ENCODE measurements at regions of chr4 and their contacts with region 1.

Region 1: DNA sequence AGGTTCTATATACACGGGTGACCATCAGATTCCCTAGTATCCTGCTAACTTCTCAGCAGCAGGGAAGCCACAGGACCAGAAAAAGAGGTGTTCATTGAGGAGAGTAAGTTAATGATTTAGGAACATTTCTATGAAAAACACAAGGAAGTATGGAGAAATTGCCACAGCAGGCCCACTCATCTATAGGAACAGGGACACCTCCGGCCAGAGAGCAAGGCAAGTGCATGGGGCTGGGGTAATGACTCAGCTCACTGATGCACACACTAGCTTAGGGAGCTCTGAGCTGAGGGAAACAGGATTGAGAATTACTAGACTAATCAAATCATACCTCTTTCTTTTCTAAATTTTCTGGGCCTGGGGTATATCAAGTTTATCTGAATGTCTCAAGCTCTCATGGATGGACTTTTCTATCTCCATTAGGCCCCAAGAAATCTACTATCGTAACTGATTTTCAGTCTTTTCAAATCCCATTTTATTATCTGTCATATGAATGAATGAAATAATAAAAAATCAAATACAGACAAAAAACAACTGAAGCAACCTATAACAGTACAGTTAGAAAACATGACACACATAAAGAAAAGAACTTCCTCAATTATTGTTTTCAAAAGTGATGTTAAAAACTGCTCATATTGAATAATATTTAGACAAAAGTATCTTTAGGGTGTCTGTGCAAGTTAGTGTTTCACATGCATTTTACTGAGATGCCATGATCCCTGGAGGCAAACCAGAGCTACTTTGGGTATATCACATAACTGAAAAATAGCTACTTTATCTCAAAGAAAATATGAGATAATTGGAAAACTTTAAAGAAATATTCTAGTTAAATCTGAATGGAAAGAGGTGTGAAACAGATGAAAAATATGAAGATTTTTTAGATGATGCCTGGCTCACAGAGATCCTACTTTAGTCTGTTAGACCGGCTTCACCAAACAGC is 89.8 kb downstream of the FBXO8 start:
- DNase-seq: peak; percentile 42
- H3K4me3 ChIP-seq: no peak overlapping the region
- H3K27ac ChIP-seq: peak overlapping the region in 1 of 2 experiments; percentile 100; a peak in 3 of 4 replicates
- H3K4me1 ChIP-seq: peaks cover 0 to 46% of the 10 kb centered on the region in 2 experiments; a peak in 2 of 4 replicates
- H3K27me3 ChIP-seq: no peaks in the 10 kb centered on the region
- CTCF ChIP-seq: no peak
- EP300 ChIP-seq: peak in 1 of 2 experiments; percentile 98; a peak in 3 of 4 replicates
- RAD21 ChIP-seq: peak; percentile 33; the same call in 1 of the 2 replicates

Region 2: DNA sequence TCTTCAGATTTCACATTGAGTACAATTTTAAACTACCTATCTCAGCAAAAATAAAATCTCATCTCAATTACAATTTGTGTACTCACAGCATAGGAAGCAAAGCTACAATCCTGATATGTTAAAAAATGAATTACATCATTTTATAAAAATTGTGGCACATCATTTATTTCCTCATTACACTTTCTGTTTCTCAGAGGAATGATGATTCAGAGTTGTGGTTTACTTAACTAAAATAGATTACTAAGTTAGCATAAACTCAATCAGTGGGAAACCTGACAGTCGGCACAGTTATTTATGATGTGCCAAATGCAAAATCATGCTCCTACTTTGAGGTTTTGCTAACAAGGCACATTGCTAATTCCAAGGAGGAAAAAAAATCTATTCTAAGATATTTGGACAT is 235.3 kb before region 1 on chr4:
- CTCF ChIA-PET with region 1: no interaction called
- POLR2A ChIA-PET with region 1: no interaction called
- DNase-seq: no peak
- H3K4me3 ChIP-seq: no peak overlapping the region
- H3K27ac ChIP-seq: peak overlapping the region in 1 of 2 experiments; percentile 34; a peak in 1 of 4 replicates
- H3K4me1 ChIP-seq: no peaks in the 10 kb centered on the region; a peak in 2 of 4 replicates
- H3K27me3 ChIP-seq: no peaks in the 10 kb centered on the region
- CTCF ChIP-seq: no peak
- EP300 ChIP-seq: no peak
- RAD21 ChIP-seq: no peak

Region 3: GRCh38 chr4:174156239-174156826 is 37.4 kb before region 1 on chr4:
- CTCF ChIA-PET with region 1: interaction called, 3 read pairs
- POLR2A ChIA-PET with region 1: interaction called, 20 read pairs
- DNase-seq: peak; percentile 27
- H3K4me3 ChIP-seq: peak overlapping the region in 1 of 2 experiments; percentile 40; a peak in 1 of 4 replicates
- H3K27ac ChIP-seq: peak overlapping the region; percentile 74 to 100; a peak in 3 of 4 replicates
- H3K4me1 ChIP-seq: peaks cover 40 to 51% of the 10 kb centered on the region in 2 experiments; a peak in 3 of 4 replicates
- H3K27me3 ChIP-seq: no peaks in the 10 kb centered on the region
- CTCF ChIP-seq: peak; percentile 76
- EP300 ChIP-seq: peak in 1 of 2 experiments; percentile 56; a peak in 1 of 4 replicates
- RAD21 ChIP-seq: peak; percentile 94

Region 4: DNA sequence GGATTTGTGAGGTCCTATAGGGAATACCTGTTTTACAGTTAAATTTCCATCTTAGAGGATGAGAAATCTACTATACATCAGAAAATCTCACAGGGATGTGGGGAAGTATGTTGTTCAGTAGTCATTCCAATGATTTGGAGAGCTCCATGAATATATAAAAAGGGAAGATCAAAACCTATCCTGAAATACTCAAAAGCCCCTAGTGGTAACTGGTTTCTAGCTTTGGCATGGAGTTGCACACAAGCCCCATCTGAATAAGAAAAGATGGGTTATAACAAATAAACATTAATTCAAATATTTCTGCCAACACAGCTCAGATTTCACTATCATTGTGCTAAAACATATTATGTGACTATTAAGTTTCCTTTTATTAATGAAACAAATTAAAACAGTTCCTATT is 11.9 kb before region 1 on chr4:
- CTCF ChIA-PET with region 1: interaction called, 14 read pairs
- POLR2A ChIA-PET with region 1: interaction called, 6 read pairs
- DNase-seq: no peak
- H3K4me3 ChIP-seq: no peak overlapping the region
- H3K27ac ChIP-seq: peak overlapping the region in 1 of 2 experiments; percentile 43; a peak in 2 of 4 replicates
- H3K4me1 ChIP-seq: peaks cover 0 to 2% of the 10 kb centered on the region in 2 experiments; a peak in 2 of 4 replicates
- H3K27me3 ChIP-seq: no peaks in the 10 kb centered on the region
- CTCF ChIP-seq: peak; percentile 33; the same call in 1 of the 2 replicates
- EP300 ChIP-seq: no peak
- RAD21 ChIP-seq: no peak

Region 5: GRCh38 chr4:174204164-174204831 is 10.6 kb after region 1 on chr4:
- CTCF ChIA-PET with region 1: interaction called, 5 read pairs
- POLR2A ChIA-PET with region 1: interaction called, 14 read pairs
- DNase-seq: peak; percentile 50
- H3K4me3 ChIP-seq: peak overlapping the region in 1 of 2 experiments; percentile 2; a peak in 2 of 4 replicates
- H3K27ac ChIP-seq: peak overlapping the region; percentile 36 to 99; a peak in 3 of 4 replicates
- H3K4me1 ChIP-seq: peaks cover 30 to 38% of the 10 kb centered on the region in 2 experiments; a peak in 3 of 4 replicates
- H3K27me3 ChIP-seq: no peaks in the 10 kb centered on the region
- CTCF ChIP-seq: no peak
- EP300 ChIP-seq: peak in 1 of 2 experiments; percentile 32; a peak in 1 of 4 replicates
- RAD21 ChIP-seq: peak; percentile 13; the same call in 1 of the 2 replicates

Region 6: GRCh38 chr4:174674305-174674840 is 480.7 kb after region 1 on chr4:
- CTCF ChIA-PET with region 1: no interaction called
- POLR2A ChIA-PET with region 1: no interaction called
- DNase-seq: no peak
- H3K4me3 ChIP-seq: no peak overlapping the region
- H3K27ac ChIP-seq: no peak overlapping the region
- H3K4me1 ChIP-seq: no peaks in the 10 kb centered on the region
- H3K27me3 ChIP-seq: no peaks in the 10 kb centered on the region; the same call in 1 of the 2 replicates
- CTCF ChIP-seq: no peak
- EP300 ChIP-seq: no peak
- RAD21 ChIP-seq: no peak

Region 7: DNA sequence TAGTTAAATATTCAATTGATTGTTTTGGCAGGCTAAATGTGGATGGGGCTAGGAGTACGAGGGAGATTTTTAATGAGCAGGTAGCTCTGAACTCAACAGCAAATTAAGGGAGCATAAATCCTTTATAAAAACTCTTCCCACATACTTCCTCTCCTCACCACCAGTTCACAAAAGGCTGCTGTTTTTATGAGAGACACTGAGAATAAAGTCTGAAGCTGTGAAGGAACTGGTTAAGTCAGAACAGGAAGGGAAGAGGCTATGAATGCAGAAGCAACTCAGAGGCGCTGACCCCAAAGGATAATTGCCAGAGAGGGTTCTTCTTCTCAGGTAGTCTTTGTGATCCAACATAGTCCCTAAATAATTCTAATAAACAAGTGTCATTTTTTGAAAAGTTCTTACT is 1212.3 kb after region 1 on chr4:
- CTCF ChIA-PET with region 1: no interaction called
- POLR2A ChIA-PET with region 1: no interaction called
- DNase-seq: no peak
- H3K4me3 ChIP-seq: no peak overlapping the region
- H3K27ac ChIP-seq: no peak overlapping the region
- H3K4me1 ChIP-seq: no peaks in the 10 kb centered on the region
- H3K27me3 ChIP-seq: no peaks in the 10 kb centered on the region
- CTCF ChIP-seq: no peak
- EP300 ChIP-seq: no peak
- RAD21 ChIP-seq: no peak